ENCODE measurements at regions of chr7 and their contacts with region 1.

Region 1: GRCh38 chr7:108253275-108254044 is 123.3 kb upstream of the LAMB4 start:
- DNase-seq: no peak
- H3K4me3 ChIP-seq: no peak overlapping the region
- H3K27ac ChIP-seq: peak overlapping the region in 1 of 2 experiments; percentile 55; a peak in 1 of 4 replicates
- H3K4me1 ChIP-seq: peaks cover 0 to 22% of the 10 kb centered on the region in 2 experiments; a peak in 2 of 4 replicates
- H3K27me3 ChIP-seq: no peaks in the 10 kb centered on the region
- CTCF ChIP-seq: no peak
- EP300 ChIP-seq: no peak; a peak in 1 of 4 replicates
- RAD21 ChIP-seq: no peak

Region 2: GRCh38 chr7:107816011-107816566 is 437.4 kb before region 1 on chr7:
- CTCF ChIA-PET with region 1: no interaction called
- POLR2A ChIA-PET with region 1: no interaction called
- DNase-seq: no peak
- H3K4me3 ChIP-seq: no peak overlapping the region
- H3K27ac ChIP-seq: no peak overlapping the region
- H3K4me1 ChIP-seq: no peaks in the 10 kb centered on the region
- H3K27me3 ChIP-seq: no peaks in the 10 kb centered on the region
- CTCF ChIP-seq: no peak
- EP300 ChIP-seq: no peak
- RAD21 ChIP-seq: no peak

Region 3: GRCh38 chr7:108266491-108266890 is 13.0 kb after region 1 on chr7:
- CTCF ChIA-PET with region 1: interaction called, 12 read pairs
- POLR2A ChIA-PET with region 1: interaction called, 4 read pairs
- DNase-seq: no peak
- H3K4me3 ChIP-seq: no peak overlapping the region
- H3K27ac ChIP-seq: no peak overlapping the region
- H3K4me1 ChIP-seq: peaks cover 5 to 32% of the 10 kb centered on the region in 2 experiments; a peak in 3 of 4 replicates
- H3K27me3 ChIP-seq: no peaks in the 10 kb centered on the region
- CTCF ChIP-seq: no peak
- EP300 ChIP-seq: no peak
- RAD21 ChIP-seq: no peak

Measured in SK-N-SH (cell line).